ENCODE measurements at regions of chr2 and their contacts with region 1.

Region 1: DNA sequence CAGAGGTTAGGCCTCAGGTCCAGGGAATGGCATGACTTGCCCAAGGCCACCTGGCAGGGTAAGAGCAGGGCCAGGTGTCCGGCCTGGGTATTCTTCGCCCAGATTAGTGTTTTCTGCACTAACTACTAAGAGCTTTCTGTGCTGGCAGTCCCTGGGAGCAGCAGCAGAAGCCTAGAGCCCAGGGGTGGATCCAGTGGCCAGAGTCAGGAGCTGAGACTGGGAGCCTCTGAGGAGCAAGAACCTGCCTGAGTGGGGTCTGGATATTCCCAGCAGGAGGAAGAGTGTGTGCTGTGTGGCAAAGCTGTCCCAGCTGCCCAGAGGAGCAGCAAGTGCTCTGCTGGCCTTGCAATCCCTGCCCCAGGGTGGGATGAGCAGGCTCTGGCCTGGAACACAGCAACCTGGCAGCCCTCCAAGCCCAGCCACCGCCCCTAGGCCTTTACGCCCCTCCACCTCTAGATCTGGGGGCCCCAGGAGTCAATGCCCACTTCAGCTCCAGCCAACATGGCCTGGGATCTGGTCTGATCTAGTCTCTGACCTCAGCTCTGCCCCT is 30.7 kb upstream of the GPAT2 start:
- DNase-seq: peak in 1 of 6 donors; percentile 59
- ATAC-seq: no peak
- H3K4me3 ChIP-seq: no peak overlapping the region
- H3K27ac ChIP-seq: no peak overlapping the region
- H3K4me1 ChIP-seq: no peaks in the 10 kb centered on the region
- H3K27me3 ChIP-seq: no peaks in the 10 kb centered on the region
- CTCF ChIP-seq: no peak

Region 2: DNA sequence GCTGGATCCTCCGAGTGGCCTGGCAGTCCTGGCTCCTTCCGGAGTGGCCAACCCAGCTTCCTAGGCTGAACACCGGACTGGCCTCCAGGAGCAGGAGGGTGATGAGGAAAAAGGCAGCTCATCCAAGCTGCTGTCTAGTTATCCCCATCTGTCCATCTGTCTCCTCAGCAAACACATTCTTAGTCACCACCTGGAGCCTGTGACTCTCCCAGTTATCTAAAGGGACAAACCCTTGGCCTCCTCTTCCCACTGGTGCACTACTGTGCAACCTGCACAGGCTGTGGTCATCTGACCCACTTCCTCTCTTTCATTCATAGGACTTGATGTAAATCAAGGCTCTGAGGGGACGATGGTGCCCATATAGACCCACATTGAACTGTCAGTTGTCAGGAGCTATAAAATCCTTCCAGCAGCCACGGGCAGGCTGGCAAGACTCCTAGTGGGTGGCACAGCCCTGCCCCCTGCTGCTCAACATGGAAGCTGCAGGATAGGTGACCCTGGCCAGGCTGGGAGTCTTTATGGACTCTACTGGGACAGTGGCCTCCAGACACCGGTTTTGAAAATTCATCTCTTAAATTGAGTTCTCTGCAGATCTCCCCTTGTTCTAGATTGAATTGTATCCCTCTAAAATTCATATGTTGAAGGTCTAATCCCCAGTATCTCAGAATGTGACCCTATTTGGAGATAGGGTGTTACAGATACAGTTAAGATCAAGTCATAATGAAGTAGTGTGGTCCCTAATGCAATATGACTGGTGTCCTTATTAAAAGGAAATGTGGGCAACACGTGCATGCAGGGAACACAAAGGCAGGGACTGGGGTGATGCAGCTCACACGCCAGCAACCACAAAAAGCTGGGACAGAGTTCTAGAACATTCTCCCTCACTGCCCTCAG is 109.0 kb after region 1 on chr2:
- intact Hi-C with region 1: no loop called
- DNase-seq: peak; percentile 58 to 90 (median 82)
- ATAC-seq: peak; percentile 95 to 100 (median 98)
- H3K4me3 ChIP-seq: no peak overlapping the region
- H3K27ac ChIP-seq: no peak overlapping the region
- H3K4me1 ChIP-seq: no peaks in the 10 kb centered on the region
- H3K27me3 ChIP-seq: no peaks in the 10 kb centered on the region
- CTCF ChIP-seq: peak; percentile 83 to 96 (median 88)

Region 3: DNA sequence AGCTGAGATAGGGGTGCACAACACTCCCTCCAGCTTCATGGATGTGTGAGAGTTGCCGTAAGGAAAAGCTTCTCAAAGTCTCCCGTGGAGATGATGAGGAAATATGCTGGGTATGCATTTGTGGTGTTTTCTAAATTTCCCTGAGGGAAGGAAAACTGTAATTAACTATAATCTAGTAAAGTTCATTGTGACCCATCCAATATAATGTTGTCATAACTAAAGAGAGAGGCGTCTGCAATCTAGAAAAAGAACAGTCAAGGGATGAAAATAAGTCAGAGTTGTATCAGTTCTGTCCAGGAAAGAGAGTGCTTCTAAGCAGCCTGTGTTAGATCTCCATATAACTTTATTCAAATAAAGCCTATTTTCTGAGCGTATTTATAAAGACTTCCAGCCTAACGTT is 681.7 kb after region 1 on chr2:
- intact Hi-C with region 1: no loop called
- DNase-seq: no peak
- ATAC-seq: peak in 2 of 4 donors; percentile 13 to 23
- H3K4me3 ChIP-seq: no peak overlapping the region
- H3K27ac ChIP-seq: peak overlapping the region in 3 of 4 donors; percentile 3 to 64 (median 4)
- H3K4me1 ChIP-seq: peaks cover 0 to 11% (median 0%) of the 10 kb centered on the region in 3 donors
- H3K27me3 ChIP-seq: no peaks in the 10 kb centered on the region
- CTCF ChIP-seq: no peak

Region 4: DNA sequence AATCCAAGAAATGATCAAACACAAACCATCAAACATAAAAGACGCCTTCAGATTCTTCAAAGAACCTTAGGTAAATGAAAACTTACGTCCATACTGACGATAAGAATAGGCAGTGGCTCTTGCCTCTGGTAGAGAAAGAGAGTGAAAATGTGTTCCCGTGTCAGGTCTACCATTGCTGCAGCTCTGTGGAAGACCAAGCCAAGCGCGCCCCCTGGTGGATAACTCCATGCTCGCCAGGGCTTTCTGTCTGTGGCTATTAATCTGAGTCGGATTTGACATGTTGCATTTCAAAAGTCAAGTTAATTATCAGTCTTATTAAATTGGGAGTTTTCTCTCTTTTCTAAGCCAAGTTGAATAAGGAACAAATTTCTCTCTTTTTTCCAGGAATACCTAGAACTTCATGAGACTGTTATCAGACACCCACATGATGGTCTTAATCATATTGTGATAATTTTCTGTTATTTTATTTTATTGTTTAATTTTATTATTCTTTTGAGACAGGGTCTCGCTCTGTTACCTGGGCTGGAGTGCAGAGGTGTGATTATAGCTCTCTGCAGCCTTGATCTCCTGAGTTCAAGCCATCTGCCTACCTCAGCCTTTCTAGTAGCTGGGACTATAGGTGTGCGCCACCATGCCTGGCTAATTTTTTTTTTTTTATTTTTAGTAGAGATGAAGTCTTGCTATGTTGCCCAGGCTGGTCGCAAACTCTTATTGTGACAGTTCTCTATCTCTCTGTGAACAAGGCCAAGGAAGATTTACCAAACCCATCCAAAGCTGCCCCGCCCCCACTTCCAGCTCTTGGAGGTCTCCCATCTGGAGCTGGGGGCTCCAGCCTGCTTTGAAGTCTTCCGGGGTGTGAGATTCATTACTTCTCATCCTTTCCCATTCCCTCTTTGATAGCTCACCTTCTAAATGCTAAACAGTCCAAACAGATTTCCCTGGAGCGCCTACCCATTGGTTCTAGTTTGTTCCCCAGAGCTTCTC is 1632.1 kb after region 1 on chr2:
- intact Hi-C with region 1: loop called in 1 of 3 experiments (anchors 10 kb)
- DNase-seq: peak; percentile 77 to 99 (median 88)
- ATAC-seq: peak; percentile 94 to 99 (median 97)
- H3K4me3 ChIP-seq: no peak overlapping the region
- H3K27ac ChIP-seq: no peak overlapping the region
- H3K4me1 ChIP-seq: peaks cover 0 to 4% (median 0%) of the 10 kb centered on the region in 3 donors
- H3K27me3 ChIP-seq: no peaks in the 10 kb centered on the region
- CTCF ChIP-seq: peak; percentile 79 to 92 (median 89)